Cardiac septum (tissue), 1 donor: ENCODE measurements at regions of chr20 and their contacts with region 1.

Region 1: DNA sequence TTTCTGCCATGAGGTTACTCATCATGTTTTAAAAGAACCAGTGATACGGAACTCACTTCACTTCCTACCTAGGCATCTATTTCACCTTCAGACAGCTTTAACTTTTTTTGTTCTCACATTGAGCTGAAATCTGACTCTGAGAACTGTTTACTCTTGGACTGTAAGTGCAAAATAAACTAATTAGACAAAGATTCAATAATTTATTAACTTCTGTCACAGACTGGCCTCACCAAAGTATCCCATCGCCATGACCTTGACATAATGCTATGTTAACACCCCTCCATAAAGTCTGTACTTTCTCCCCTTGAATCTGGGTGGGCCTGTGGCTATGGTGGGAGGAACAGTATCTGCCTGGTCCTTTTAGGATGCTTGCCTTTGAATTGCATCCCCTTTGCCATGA is 448.1 kb downstream of the CBLN4 start:
- DNase-seq: no peak

Region 2: GRCh38 chr20:55977690-55978459 is 420.7 kb after region 1 on chr20:
- intact Hi-C with region 1: loop called (anchors 5 kb)
- DNase-seq: no peak